Activated naive CD4-positive, alpha-beta T cell treated with anti-CD3 and anti-CD28 coated beads for 36 hours (primary cell): ENCODE measurements at regions of chr1 and their contacts with region 1.

Region 1: DNA sequence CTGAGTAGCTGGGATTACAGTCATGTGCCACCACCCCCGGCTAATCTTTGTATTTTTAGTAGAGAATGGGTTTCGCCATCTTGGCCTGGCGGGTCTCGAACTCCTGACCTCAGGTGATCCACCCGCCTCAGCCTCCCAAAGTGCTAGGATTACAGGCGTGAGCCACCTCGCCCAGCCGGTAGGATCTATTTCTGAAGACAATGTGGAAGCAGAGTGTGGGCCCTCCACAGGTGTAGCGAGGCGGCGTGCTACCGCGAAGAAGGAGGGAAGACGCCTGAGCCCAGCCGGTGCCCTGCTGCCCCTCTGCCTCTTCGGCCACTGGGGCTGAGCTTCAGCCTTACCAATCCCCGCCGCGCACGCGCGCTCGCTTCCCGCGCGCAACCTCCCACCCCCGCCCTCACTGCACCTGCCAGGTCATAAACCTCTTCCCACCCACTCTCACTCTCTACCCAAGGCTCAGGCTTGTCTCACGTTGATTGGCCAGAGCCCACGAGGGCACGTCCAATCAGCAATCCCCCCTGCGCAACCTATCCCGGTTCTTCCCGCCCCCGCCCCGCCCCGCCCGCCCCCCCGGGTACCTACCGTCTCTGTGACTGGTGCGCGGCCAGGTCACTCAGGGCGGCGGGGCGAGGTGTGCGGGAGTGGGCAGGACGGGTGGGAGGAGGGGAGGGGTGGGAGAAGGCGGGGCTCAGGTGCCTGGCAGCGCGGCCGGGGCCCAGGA is 409 bp upstream of the HOOK1 start:
- DNase-seq: peak; percentile 93
- H3K4me3 Mint-ChIP-seq: no peak overlapping the region
- H3K27ac Mint-ChIP-seq: peak overlapping the region; percentile 78
- H3K4me1 Mint-ChIP-seq: peaks cover 3% of the 10 kb centered on the region
- H3K27me3 Mint-ChIP-seq: peaks cover 8% of the 10 kb centered on the region

Region 2: DNA sequence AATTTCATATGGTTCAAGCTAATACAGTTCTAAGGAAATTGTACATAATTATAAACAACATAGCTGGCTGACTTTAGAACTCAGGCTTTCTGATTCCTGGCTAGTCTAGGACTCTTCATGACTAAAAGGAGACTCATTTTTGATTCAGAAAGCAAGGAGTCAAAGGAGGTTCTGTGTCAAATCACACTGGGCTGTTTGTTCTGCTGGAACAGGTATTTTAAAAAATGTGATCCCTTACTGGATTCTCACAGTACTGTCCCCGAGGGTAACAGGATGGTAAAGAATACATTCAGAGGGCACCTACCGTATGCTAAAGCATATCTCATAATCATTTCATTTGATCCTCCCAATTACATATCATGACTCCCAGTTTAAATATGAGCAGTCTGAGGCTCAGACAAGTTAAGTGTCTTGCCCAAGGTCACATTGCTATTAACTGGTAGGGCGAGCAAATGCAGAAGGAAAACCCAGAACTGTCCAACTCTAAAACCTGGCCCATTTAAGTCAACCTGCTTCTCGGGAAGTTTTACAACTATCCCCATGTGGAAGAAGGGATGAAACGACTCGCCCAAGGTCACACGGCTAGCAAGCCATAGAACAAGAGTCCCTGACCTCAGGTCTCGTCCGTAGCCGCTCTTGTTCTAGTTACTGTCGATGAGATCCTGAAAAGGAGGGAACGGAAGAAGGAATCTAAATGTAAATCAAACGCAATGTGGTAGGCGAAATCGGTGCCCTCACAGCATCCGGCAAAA is 1115.2 kb before region 1 on chr1:
- CTCF ChIA-PET with region 1: no interaction called
- intact Hi-C with region 1: loop called (anchors 1 kb)
- DNase-seq: peak; percentile 17
- H3K4me3 Mint-ChIP-seq: peak overlapping the region; percentile 96
- H3K27ac Mint-ChIP-seq: peak overlapping the region; percentile 91
- H3K4me1 Mint-ChIP-seq: peaks cover 19% of the 10 kb centered on the region
- H3K27me3 Mint-ChIP-seq: no peaks in the 10 kb centered on the region

Region 3: DNA sequence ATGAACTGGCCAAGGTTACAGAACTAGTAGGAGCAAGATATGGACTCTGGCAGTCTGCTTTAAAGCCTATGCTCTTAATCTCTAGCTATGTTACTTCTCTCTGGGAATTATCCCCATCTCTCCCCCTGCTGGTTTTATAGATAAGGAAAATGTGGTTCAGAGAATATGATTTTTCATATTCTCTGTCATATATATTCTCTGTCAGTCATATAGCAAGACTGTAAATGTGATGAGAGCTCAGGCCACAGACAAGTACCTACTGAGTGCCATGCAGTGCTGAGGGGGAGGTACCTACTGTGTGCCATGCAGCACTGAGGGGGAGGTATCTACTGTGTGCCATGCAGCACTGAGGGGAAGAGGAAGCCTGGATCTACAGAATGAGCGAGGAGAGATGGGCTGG is 737.7 kb before region 1 on chr1:
- CTCF ChIA-PET with region 1: no interaction called
- intact Hi-C with region 1: loop called (anchors 10 kb)
- DNase-seq: no peak
- H3K4me3 Mint-ChIP-seq: no peak overlapping the region
- H3K27ac Mint-ChIP-seq: no peak overlapping the region
- H3K4me1 Mint-ChIP-seq: peaks cover 23% of the 10 kb centered on the region
- H3K27me3 Mint-ChIP-seq: no peaks in the 10 kb centered on the region

Region 4: DNA sequence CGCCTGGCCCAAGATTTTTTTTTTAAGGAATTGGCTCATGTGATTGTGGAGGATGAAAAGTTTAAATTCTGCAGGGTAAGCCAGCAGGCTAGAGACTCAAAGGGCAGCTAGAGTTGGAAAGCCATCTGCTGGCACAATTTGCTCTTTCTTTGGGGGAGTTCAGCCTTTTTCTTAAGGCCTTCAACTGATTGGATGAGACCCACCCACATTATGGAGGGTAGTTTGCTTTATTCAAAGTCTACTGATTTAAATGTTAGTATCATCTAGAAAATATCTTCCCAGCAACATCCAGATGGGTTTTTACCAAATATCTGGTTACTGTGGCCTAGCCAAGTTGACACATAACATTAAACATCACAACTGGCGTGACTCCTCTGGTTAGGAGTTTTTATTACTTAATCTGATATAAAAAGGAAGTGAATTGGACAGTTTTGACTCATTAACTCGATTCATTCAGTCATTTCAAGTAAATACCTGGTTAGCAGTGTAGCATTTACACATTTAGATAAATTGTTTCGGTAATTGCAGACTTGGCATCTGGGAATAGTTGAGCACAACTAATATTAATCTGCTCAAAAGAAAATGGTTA is 12.8 kb after region 1 on chr1:
- CTCF ChIA-PET with region 1: no interaction called
- intact Hi-C with region 1: loop called (anchors 1 kb)
- DNase-seq: no peak
- H3K4me3 Mint-ChIP-seq: no peak overlapping the region
- H3K27ac Mint-ChIP-seq: no peak overlapping the region
- H3K4me1 Mint-ChIP-seq: peaks cover 5% of the 10 kb centered on the region
- H3K27me3 Mint-ChIP-seq: no peaks in the 10 kb centered on the region

Region 5: GRCh38 chr1:59926381-59927123 is 112.2 kb after region 1 on chr1 and contains the start of gene CYP2J2:
- CTCF ChIA-PET with region 1: no interaction called
- intact Hi-C with region 1: loop called (anchors 1 kb)
- DNase-seq: peak; percentile 60
- H3K4me3 Mint-ChIP-seq: peak within 1 kb of the TSS; percentile 82
- H3K27ac Mint-ChIP-seq: peak within 1 kb of the TSS; percentile 2
- H3K4me1 Mint-ChIP-seq: peaks cover 9% of the 10 kb centered on the region
- H3K27me3 Mint-ChIP-seq: peaks cover 21% of the 10 kb centered on the region
- total RNA-seq, gene CYP2J2: 2.3 to 2.6 TPM